Activated CD4-positive, alpha-beta T cell treated with anti-CD3 and anti-CD28 coated beads for 36 hours (primary cell): ENCODE measurements at regions of chr17 and their contacts with region 1.

Region 1: GRCh38 chr17:74961657-74962490 is 10.7 kb downstream of the HID1 start:
- DNase-seq: peak; percentile 92
- ATAC-seq: peak; percentile 79
- H3K4me3 Mint-ChIP-seq: no peak overlapping the region
- H3K27ac Mint-ChIP-seq: no peak overlapping the region
- H3K4me1 Mint-ChIP-seq: peaks cover 6% of the 10 kb centered on the region
- H3K27me3 Mint-ChIP-seq: no peaks in the 10 kb centered on the region

Region 2: GRCh38 chr17:74923533-74924249 is 38.2 kb before region 1 on chr17:
- CTCF ChIA-PET with region 1: interaction called, 31 read pairs
- POLR2A ChIA-PET with region 1: no interaction called
- intact Hi-C with region 1: loop called (anchors 1 kb)
- DNase-seq: peak; percentile 87
- ATAC-seq: peak; percentile 75
- H3K4me3 Mint-ChIP-seq: no peak overlapping the region
- H3K27ac Mint-ChIP-seq: no peak overlapping the region
- H3K4me1 Mint-ChIP-seq: peaks cover 7% of the 10 kb centered on the region
- H3K27me3 Mint-ChIP-seq: peaks cover 37% of the 10 kb centered on the region

Region 3: GRCh38 chr17:74987418-74987908 is 25.6 kb after region 1 on chr17 and contains the start of gene CDR2L:
- CTCF ChIA-PET with region 1: interaction called, 28 read pairs
- POLR2A ChIA-PET with region 1: no interaction called
- intact Hi-C with region 1: no loop called
- DNase-seq: peak; percentile 95
- ATAC-seq: peak; percentile 98
- H3K4me3 Mint-ChIP-seq: peak within 1 kb of the TSS; percentile 73
- H3K27ac Mint-ChIP-seq: no peak within 1 kb of the TSS
- H3K4me1 Mint-ChIP-seq: peaks cover 9% of the 10 kb centered on the region
- H3K27me3 Mint-ChIP-seq: peaks cover 10% of the 10 kb centered on the region
- total RNA-seq, gene CDR2L: 0.89 to 0.91 TPM

Region 4: GRCh38 chr17:75012346-75013091 is 50.6 kb after region 1 on chr17 and contains the start of gene MRPL58:
- CTCF ChIA-PET with region 1: interaction called, 52 read pairs
- POLR2A ChIA-PET with region 1: no interaction called
- intact Hi-C with region 1: loop called (anchors 2 kb)
- DNase-seq: peak; percentile 91
- ATAC-seq: peak; percentile 96
- H3K4me3 Mint-ChIP-seq: peak within 1 kb of the TSS; percentile 95
- H3K27ac Mint-ChIP-seq: peak within 1 kb of the TSS; percentile 92
- H3K4me1 Mint-ChIP-seq: peaks cover 31% of the 10 kb centered on the region
- H3K27me3 Mint-ChIP-seq: no peaks in the 10 kb centered on the region
- total RNA-seq, gene MRPL58: 64.6 to 66.5 TPM

Region 5: GRCh38 chr17:75046582-75047289 is 84.9 kb after region 1 on chr17 and contains the starts of genes ATP5PD and KCTD2:
- CTCF ChIA-PET with region 1: interaction called, 13 read pairs
- POLR2A ChIA-PET with region 1: interaction called, 3 read pairs
- intact Hi-C with region 1: no loop called
- DNase-seq: peak; percentile 97
- ATAC-seq: peak; percentile 95
- H3K4me3 Mint-ChIP-seq: peak within 1 kb of the TSS; percentile 99
- H3K27ac Mint-ChIP-seq: peak within 1 kb of the TSS; percentile 94
- H3K4me1 Mint-ChIP-seq: peaks cover 37% of the 10 kb centered on the region
- H3K27me3 Mint-ChIP-seq: no peaks in the 10 kb centered on the region
- total RNA-seq, gene ATP5PD: 194 to 237 TPM
- total RNA-seq, gene KCTD2: 15.3 to 16.7 TPM

Region 6: DNA sequence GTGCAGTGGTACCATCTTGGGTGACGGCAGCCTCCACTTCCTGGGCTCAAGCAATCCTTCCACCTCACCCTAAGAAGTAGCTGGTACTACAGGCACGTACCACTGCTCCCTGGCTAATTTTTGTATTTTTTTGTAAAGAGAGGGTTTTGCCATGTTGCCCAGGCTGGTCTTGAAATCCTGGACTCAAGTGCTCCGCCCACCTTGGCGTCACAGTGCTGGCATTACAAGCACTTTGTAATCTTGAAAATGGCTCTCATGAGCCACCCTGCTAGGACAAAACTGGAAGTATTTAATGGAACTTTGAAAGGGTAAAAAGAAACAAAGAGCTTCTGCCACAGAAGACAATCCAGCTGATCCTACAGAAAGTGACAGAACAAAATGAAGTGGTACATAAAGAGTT is 211.7 kb after region 1 on chr17:
- CTCF ChIA-PET with region 1: interaction called, 12 read pairs
- POLR2A ChIA-PET with region 1: no interaction called
- intact Hi-C with region 1: no loop called
- DNase-seq: no peak
- ATAC-seq: no peak
- H3K4me3 Mint-ChIP-seq: no peak overlapping the region
- H3K27ac Mint-ChIP-seq: no peak overlapping the region
- H3K4me1 Mint-ChIP-seq: peaks cover 14% of the 10 kb centered on the region
- H3K27me3 Mint-ChIP-seq: no peaks in the 10 kb centered on the region

Region 7: GRCh38 chr17:75412455-75413317 is 450.8 kb after region 1 on chr17:
- CTCF ChIA-PET with region 1: interaction called, 15 read pairs
- POLR2A ChIA-PET with region 1: no interaction called
- intact Hi-C with region 1: loop called (anchors 1 kb)
- DNase-seq: peak; percentile 84
- ATAC-seq: peak; percentile 85
- H3K4me3 Mint-ChIP-seq: peak overlapping the region; percentile 44
- H3K27ac Mint-ChIP-seq: peak overlapping the region; percentile 3
- H3K4me1 Mint-ChIP-seq: peaks cover 15% of the 10 kb centered on the region
- H3K27me3 Mint-ChIP-seq: no peaks in the 10 kb centered on the region